WTC11 (cell line): ENCODE measurements at regions of chr2 and their contacts with region 1.

Region 1: GRCh38 chr2:177195194-177195593 is 17.4 kb upstream of the HNRNPA3 start:
- DNase-seq: no peak
- ATAC-seq: peak; percentile 90
- H3K4me3 Mint-ChIP-seq: no peak overlapping the region
- H3K27ac Mint-ChIP-seq: no peak overlapping the region
- H3K4me1 Mint-ChIP-seq: no peaks in the 10 kb centered on the region
- H3K27me3 Mint-ChIP-seq: no peaks in the 10 kb centered on the region; the same call in 1 of the 2 replicates
- CTCF ChIP-seq: no peak

Region 2: DNA sequence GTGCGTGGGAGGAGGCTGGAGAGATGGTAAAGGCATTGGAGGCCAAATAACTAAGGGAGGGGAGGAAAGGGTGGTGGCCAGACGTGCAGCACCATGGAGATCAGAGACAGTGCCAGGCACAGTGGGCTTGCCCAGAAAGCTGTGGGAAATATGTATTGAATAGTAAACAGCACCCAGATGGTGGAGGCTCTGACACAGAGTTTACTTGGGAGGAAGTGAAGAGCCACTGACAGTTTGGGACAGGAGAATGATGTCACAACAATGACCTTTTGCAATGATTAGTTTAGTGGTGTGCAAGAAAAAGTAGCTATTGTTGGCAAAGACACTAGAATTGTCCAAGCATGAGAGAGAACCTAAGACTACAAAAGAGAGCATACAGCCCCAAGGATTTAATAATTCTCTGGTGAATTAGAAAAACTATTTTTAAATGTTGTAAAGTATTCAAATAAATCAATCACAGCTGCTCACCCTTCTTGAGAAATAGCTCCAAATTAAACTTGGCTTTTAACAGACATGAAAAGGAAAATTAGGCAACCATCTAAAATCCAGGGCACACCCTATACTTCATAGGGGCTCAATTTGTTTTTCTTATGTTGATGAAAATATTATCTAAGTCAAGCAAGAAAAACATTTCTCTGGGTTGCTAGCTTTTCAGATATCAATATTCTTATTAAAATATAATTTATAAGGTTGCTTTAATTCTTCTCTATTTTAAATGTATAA is 441.3 kb before region 1 on chr2:
- CTCF ChIA-PET with region 1: no interaction called
- POLR2A ChIA-PET with region 1: no interaction called
- DNase-seq: no peak
- ATAC-seq: no peak
- H3K4me3 Mint-ChIP-seq: no peak overlapping the region
- H3K27ac Mint-ChIP-seq: peak overlapping the region; percentile 80; the same call in 1 of the 2 replicates
- H3K4me1 Mint-ChIP-seq: peaks cover 57% of the 10 kb centered on the region
- H3K27me3 Mint-ChIP-seq: no peaks in the 10 kb centered on the region
- CTCF ChIP-seq: no peak

Region 3: GRCh38 chr2:176873405-176873804 is 321.8 kb before region 1 on chr2:
- CTCF ChIA-PET with region 1: no interaction called
- POLR2A ChIA-PET with region 1: no interaction called
- DNase-seq: no peak
- ATAC-seq: peak; percentile 49; the same call in 1 of the 2 replicates
- H3K4me3 Mint-ChIP-seq: no peak overlapping the region
- H3K27ac Mint-ChIP-seq: peak overlapping the region; percentile 75; the same call in 1 of the 2 replicates
- H3K4me1 Mint-ChIP-seq: peaks cover 18% of the 10 kb centered on the region
- H3K27me3 Mint-ChIP-seq: no peaks in the 10 kb centered on the region; the same call in 1 of the 2 replicates
- CTCF ChIP-seq: no peak

Region 4: DNA sequence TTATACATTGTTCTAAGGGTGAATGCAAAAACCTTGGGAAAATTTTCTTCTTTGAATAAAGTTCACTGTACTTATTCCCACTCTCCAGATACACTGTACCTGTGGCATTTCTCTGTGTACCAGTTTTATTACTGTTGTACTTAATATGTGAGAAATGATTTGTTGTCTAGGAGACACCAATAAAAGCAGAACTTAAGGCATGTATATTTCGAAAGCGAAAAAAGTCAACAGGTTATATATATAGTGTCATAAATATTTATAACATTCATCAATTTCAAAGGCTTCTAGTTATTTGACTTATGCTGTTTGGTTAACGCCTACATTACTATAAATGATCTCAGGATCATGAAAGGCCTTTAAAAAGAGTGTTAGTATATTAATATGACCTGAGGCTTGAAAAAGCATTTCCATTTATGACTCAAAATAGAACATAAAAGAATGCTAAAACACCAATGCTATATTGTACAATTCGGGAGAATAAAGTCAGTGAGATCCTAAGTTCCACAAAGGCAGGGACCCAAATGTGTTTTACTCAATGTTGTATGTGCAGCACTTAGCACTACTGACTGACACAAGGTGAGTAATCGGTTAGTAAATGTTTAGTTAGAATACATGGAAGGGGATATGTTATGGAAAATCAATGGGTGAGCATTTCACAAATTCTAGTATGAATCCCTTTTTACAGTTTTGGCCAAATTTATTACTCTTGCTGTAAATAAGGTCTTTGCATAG is 14.8 kb before region 1 on chr2:
- CTCF ChIA-PET with region 1: interaction called, 10 read pairs
- POLR2A ChIA-PET with region 1: no interaction called
- DNase-seq: no peak
- ATAC-seq: no peak
- H3K4me3 Mint-ChIP-seq: no peak overlapping the region
- H3K27ac Mint-ChIP-seq: no peak overlapping the region
- H3K4me1 Mint-ChIP-seq: peaks cover 18% of the 10 kb centered on the region
- H3K27me3 Mint-ChIP-seq: peaks cover 2% of the 10 kb centered on the region; the same call in 1 of the 2 replicates
- CTCF ChIP-seq: no peak

Region 5: GRCh38 chr2:177212106-177212890 is 17.1 kb after region 1 on chr2 and contains the start of gene HNRNPA3:
- CTCF ChIA-PET with region 1: interaction called, 11 read pairs
- POLR2A ChIA-PET with region 1: interaction called, 11 read pairs
- DNase-seq: peak; percentile 99
- ATAC-seq: peak; percentile 91
- H3K4me3 Mint-ChIP-seq: peak within 1 kb of the TSS; percentile 99
- H3K27ac Mint-ChIP-seq: peak within 1 kb of the TSS; percentile 100
- H3K4me1 Mint-ChIP-seq: peaks cover 53% of the 10 kb centered on the region
- H3K27me3 Mint-ChIP-seq: peaks cover 2% of the 10 kb centered on the region; the same call in 1 of the 2 replicates
- CTCF ChIP-seq: no peak
- total RNA-seq, gene HNRNPA3: 367 to 406 TPM (median 379 TPM) in 3 replicates